PC-3 (cell line): ENCODE measurements at regions of chr3 and their contacts with region 1.

Region 1: GRCh38 chr3:49028673-49029562 is at the start of gene IMPDH2:
- DNase-seq: peak; percentile 98
- ATAC-seq: peak; percentile 89
- H3K4me3 ChIP-seq: peak within 1 kb of the TSS; percentile 83
- H3K27ac ChIP-seq: peak within 1 kb of the TSS; percentile 68
- H3K4me1 ChIP-seq: peaks cover 39% of the 10 kb centered on the region
- H3K27me3 ChIP-seq: no peaks in the 10 kb centered on the region
- CTCF ChIP-seq: peak; percentile 22; the same call in 1 of the 2 replicates
- total RNA-seq, gene IMPDH2: 532 and 576 TPM in 2 replicates

Region 2: GRCh38 chr3:48997714-48998641 is 30.9 kb before region 1 on chr3:
- CTCF ChIA-PET with region 1: no interaction called
- POLR2A ChIA-PET with region 1: no interaction called
- intact Hi-C with region 1: no loop called
- DNase-seq: no peak
- ATAC-seq: no peak
- H3K4me3 ChIP-seq: no peak overlapping the region
- H3K27ac ChIP-seq: no peak overlapping the region
- H3K4me1 ChIP-seq: no peaks in the 10 kb centered on the region
- H3K27me3 ChIP-seq: no peaks in the 10 kb centered on the region
- CTCF ChIP-seq: no peak

Region 3: DNA sequence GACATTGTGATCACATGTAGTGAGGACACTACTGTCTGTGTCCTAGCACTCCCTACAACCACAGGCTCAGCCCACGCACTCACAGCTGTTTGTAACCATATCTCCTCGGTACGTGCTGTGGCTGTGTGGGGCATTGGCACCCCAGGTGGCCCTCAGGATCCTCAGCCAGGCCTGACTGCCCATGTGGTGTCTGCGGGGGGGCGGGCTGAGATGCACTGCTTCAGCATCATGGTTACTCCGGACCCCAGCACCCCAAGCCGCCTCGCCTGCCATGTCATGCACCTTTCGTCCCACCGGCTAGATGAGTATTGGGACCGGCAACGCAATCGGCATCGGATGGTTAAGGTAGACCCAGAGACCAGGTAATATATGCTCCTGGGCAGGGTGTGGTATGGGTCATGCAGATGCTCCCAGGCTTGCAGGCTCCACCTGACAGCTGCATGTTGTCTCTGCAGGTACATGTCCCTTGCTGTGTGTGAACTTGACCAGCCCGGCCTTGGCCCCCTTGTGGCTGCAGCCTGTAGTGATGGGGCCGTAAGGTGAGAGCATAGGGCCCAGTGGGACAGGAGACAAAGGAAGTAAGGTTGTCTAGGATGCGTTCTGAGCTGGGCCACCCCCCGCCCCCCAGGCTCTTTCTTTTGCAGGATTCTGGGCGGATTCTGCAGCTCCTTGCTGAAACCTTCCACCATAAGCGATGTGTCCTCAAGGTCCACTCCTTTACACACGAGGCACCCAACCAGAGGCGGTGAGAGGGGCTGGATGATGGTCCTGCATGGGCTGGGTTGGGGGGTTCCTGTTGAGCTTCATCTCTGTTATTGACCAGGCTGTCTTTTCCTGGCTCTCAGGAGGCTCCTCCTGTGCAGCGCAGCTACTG is 14.9 kb before region 1 on chr3:
- CTCF ChIA-PET with region 1: no interaction called
- POLR2A ChIA-PET with region 1: no interaction called
- intact Hi-C with region 1: no loop called
- DNase-seq: peak; percentile 69
- ATAC-seq: peak; percentile 24
- H3K4me3 ChIP-seq: no peak overlapping the region
- H3K27ac ChIP-seq: no peak overlapping the region
- H3K4me1 ChIP-seq: peaks cover 11% of the 10 kb centered on the region; the same call in 1 of the 2 replicates
- H3K27me3 ChIP-seq: no peaks in the 10 kb centered on the region
- CTCF ChIP-seq: peak; percentile 82

Region 4: DNA sequence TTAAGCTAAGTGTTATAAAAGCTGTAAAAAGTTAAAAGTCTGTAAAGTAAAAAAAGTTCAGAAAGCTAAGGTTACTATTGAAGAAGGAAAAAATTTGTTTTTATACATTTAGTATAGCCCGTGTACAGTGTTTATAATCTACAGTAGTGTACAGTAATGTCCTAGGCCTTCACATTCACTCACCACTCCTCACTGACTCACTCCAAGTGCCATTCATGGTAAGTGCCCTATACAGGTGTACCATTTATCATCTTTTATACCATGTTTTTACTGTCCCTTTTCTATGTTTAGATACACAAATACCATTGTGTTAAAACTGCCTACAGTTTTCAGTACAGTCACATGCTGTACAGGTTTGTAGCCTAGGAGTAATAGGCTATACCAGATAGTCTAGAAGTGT is 128.4 kb after region 1 on chr3:
- CTCF ChIA-PET with region 1: interaction called, 14 read pairs
- POLR2A ChIA-PET with region 1: no interaction called
- intact Hi-C with region 1: no loop called
- DNase-seq: peak; percentile 38
- ATAC-seq: peak; percentile 65
- H3K4me3 ChIP-seq: no peak overlapping the region
- H3K27ac ChIP-seq: no peak overlapping the region
- H3K4me1 ChIP-seq: no peaks in the 10 kb centered on the region
- H3K27me3 ChIP-seq: no peaks in the 10 kb centered on the region
- CTCF ChIP-seq: no peak

Region 5: DNA sequence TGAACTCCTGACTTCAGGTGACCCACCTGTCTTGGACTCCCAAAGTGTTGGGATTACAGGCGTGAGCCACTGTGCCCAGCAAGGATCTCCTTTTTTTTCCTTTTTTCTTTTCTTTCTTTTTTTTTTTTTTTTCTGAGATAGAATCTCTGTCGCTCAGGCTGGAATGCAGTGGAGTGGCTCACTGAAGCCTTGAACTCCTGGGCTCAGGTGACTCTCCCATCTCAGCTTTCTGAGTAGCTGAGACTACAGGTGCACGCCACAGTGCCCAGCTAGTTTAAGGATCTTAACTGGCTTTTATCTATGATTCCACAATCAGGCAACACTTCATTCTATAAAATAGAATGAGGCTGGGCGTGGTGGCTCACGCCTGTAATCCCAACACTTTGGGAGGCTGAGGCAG is 416.5 kb after region 1 on chr3:
- CTCF ChIA-PET with region 1: no interaction called
- POLR2A ChIA-PET with region 1: no interaction called
- intact Hi-C with region 1: no loop called
- DNase-seq: no peak
- ATAC-seq: no peak
- H3K4me3 ChIP-seq: no peak overlapping the region
- H3K27ac ChIP-seq: no peak overlapping the region
- H3K4me1 ChIP-seq: peaks cover 8% of the 10 kb centered on the region
- H3K27me3 ChIP-seq: no peaks in the 10 kb centered on the region
- CTCF ChIP-seq: no peak

Region 6: GRCh38 chr3:49673715-49674496 is 645.0 kb after region 1 on chr3 and contains the start of gene APEH:
- CTCF ChIA-PET with region 1: no interaction called
- POLR2A ChIA-PET with region 1: no interaction called
- intact Hi-C with region 1: no loop called
- DNase-seq: peak; percentile 98
- ATAC-seq: peak; percentile 81
- H3K4me3 ChIP-seq: peak within 1 kb of the TSS; percentile 88
- H3K27ac ChIP-seq: peak within 1 kb of the TSS; percentile 89
- H3K4me1 ChIP-seq: peaks cover 26% of the 10 kb centered on the region
- H3K27me3 ChIP-seq: no peaks in the 10 kb centered on the region
- CTCF ChIP-seq: no peak
- total RNA-seq, gene APEH: 236 and 246 TPM in 2 replicates